ENCODE measurements at regions of chr15 and their contacts with region 1.

Region 1: DNA sequence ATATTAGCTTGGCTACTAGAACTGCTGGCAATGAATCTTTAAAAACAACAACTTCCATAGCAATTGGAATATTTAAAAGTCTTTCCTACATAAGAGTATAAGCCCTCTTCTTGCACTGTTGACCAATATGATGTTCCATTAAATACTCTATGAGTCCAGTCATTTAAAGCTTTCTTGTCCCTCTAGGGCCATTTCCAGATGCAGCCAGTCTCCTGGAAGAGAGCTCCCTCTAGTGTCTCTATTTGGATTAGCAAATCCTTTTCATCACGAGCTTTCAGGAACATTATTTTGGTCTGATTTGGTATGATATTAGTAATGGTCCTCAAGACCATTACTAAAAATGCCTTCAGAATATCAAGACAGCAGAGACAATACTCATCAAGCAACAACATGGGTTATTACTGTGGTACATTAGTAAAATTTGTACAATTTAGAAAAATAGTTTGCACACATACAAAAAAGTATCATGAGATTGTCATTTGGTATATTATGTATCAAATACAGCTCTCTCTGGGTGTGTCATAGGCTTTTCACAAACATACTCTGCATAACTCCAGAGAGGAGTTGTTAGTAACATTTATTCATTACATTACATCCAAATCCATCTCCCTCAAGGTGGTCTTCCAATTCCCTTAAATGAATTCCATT is 101.3 kb downstream of the DPH6 start:
- DNase-seq: peak in 3 of 14 experiments; percentile 17 to 26 (median 25)
- ATAC-seq: no peak
- H3K4me3 ChIP-seq: no peak overlapping the region
- H3K4me3 Mint-ChIP-seq: no peak overlapping the region
- H3K27ac ChIP-seq: no peak overlapping the region
- H3K27ac Mint-ChIP-seq: no peak overlapping the region
- H3K4me1 ChIP-seq: no peaks in the 10 kb centered on the region
- H3K4me1 Mint-ChIP-seq: no peaks in the 10 kb centered on the region
- H3K27me3 ChIP-seq: no peaks in the 10 kb centered on the region
- H3K27me3 Mint-ChIP-seq: no peaks in the 10 kb centered on the region
- CTCF ChIP-seq: peak; percentile 63

Region 2: GRCh38 chr15:35078221-35078915 is 366.3 kb before region 1 on chr15:
- CTCF ChIA-PET with region 1: interaction called, 3 read pairs
- POLR2A ChIA-PET with region 1: no interaction called
- intact Hi-C with region 1: loop called (anchors 2 kb)
- DNase-seq: peak in 7 of 14 experiments; percentile 3 to 64 (median 19)
- ATAC-seq: peak; percentile 44
- H3K4me3 ChIP-seq: no peak overlapping the region
- H3K4me3 Mint-ChIP-seq: no peak overlapping the region
- H3K27ac ChIP-seq: no peak overlapping the region
- H3K27ac Mint-ChIP-seq: no peak overlapping the region
- H3K4me1 ChIP-seq: no peaks in the 10 kb centered on the region
- H3K4me1 Mint-ChIP-seq: no peaks in the 10 kb centered on the region
- H3K27me3 ChIP-seq: peaks cover 0 to 3% of the 10 kb centered on the region in 2 experiments
- H3K27me3 Mint-ChIP-seq: peaks cover 22% of the 10 kb centered on the region
- CTCF ChIP-seq: peak; percentile 66

Region 3: DNA sequence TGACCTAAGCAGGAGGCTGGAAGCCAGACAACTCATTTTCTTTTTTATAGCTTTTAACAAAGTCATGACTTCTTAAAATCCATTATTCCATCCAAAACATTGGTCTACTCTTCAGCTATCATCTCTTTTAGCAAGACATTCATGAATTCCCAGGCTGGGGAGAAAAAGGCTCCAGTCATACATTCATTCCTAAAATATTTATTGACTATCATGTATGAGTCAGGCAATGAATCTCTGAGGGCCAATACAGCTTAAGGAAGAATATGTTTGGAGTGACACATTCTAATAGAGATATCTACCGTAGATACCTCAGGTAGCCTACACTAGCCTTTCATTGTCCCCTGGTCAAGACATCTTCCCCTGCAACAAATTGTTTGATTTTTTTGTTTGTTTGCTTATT is 163.2 kb before region 1 on chr15:
- CTCF ChIA-PET with region 1: no interaction called
- POLR2A ChIA-PET with region 1: no interaction called
- intact Hi-C with region 1: no loop called
- DNase-seq: no peak
- ATAC-seq: no peak
- H3K4me3 ChIP-seq: no peak overlapping the region
- H3K4me3 Mint-ChIP-seq: no peak overlapping the region
- H3K27ac ChIP-seq: no peak overlapping the region
- H3K27ac Mint-ChIP-seq: no peak overlapping the region
- H3K4me1 ChIP-seq: no peaks in the 10 kb centered on the region
- H3K4me1 Mint-ChIP-seq: no peaks in the 10 kb centered on the region
- H3K27me3 ChIP-seq: no peaks in the 10 kb centered on the region
- H3K27me3 Mint-ChIP-seq: no peaks in the 10 kb centered on the region
- CTCF ChIP-seq: no peak

Measured in CD4-positive, alpha-beta T cell (primary cell).